Breast epithelium (tissue), 4 donors: ENCODE measurements at regions of chr16 and their contacts with region 1.

Region 1: GRCh38 chr16:49904348-49905062 is 48.6 kb upstream of the ZNF423 start:
- DNase-seq: no peak
- H3K4me3 ChIP-seq: no peak overlapping the region
- H3K27ac ChIP-seq: no peak overlapping the region
- H3K4me1 ChIP-seq: no peaks in the 10 kb centered on the region
- H3K27me3 ChIP-seq: no peaks in the 10 kb centered on the region
- CTCF ChIP-seq: no peak
- POLR2A ChIP-seq: no peak

Region 2: DNA sequence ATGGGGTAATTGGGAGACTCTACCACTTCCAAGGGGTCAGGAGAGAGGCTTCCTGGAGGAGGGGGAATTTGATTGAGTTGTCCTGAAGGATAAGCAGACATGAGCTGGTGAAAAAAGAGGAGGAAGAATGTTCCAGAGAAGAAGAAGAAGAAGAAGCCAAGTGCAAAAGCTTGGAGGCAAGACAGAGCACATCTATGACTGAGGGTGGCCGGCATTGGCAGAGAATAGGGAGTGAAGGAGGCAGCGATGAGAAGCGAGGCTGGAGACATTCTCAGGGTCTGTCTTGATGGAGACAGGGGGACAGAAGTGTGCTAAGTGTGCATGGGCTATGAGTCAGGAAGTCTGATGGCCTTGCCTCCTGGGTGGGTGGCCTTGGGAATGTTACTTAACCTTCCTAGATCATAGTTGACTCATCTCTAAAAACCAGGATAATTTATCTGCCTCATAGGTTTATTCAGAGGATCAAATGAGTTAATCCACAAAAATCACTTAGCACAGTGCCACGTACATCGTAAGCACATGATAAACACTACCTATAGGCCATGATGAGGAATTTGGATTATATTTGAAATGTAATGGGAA is 1920.4 kb before region 1 on chr16:
- intact Hi-C with region 1: no loop called
- DNase-seq: no peak
- H3K4me3 ChIP-seq: no peak overlapping the region
- H3K27ac ChIP-seq: no peak overlapping the region
- H3K4me1 ChIP-seq: no peaks in the 10 kb centered on the region
- H3K27me3 ChIP-seq: peaks cover 0 to 6% of the 10 kb centered on the region in 2 donors
- CTCF ChIP-seq: no peak
- POLR2A ChIP-seq: no peak

Region 3: DNA sequence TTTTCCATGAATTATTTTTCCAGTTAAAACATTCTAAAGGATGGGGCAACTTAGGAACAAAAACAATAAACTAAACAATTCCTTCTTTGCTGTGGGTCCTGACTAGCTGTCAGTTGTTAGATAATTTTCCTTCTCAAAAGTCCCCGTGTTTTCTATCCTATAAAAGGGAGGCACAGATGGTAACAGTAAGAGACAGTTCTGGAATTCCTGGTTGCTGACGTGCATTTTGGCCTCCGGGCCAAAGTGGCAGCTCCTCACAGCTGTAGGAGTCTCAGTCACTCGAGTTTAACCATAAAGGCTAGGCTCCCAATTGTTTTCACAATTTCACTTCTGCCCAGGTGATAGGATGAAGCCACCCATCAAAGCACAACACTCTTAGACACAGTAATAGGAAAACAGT is 28.4 kb after region 1 on chr16:
- intact Hi-C with region 1: no loop called
- DNase-seq: peak in 1 of 2 donors; percentile 21
- H3K4me3 ChIP-seq: no peak overlapping the region
- H3K27ac ChIP-seq: no peak overlapping the region
- H3K4me1 ChIP-seq: no peaks in the 10 kb centered on the region
- H3K27me3 ChIP-seq: no peaks in the 10 kb centered on the region
- CTCF ChIP-seq: no peak
- POLR2A ChIP-seq: no peak

Region 4: DNA sequence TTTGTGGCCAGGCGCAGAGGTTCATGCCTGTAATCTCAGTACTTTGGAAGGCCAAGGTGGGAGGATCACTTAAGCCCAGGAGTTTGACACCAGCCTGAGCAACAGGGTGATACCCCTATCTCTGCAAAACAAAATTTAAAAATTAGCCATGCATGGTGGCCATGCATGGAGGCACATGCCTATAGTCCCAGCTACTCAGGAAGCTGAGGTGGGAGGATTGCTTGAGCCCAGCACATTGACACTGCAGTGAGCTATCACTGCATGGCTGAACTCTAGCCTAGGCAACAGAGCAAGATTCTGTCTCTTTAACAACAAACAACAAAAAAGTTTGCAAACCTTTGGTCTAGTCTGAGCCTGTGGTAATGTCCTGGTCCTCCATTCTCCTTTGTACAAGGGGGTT is 51.4 kb after region 1 on chr16:
- intact Hi-C with region 1: loop called (anchors 2 kb)
- DNase-seq: no peak
- H3K4me3 ChIP-seq: no peak overlapping the region
- H3K27ac ChIP-seq: no peak overlapping the region
- H3K4me1 ChIP-seq: peaks cover 0 to 4% of the 10 kb centered on the region in 2 donors
- H3K27me3 ChIP-seq: no peaks in the 10 kb centered on the region
- CTCF ChIP-seq: no peak
- POLR2A ChIP-seq: no peak

Region 5: DNA sequence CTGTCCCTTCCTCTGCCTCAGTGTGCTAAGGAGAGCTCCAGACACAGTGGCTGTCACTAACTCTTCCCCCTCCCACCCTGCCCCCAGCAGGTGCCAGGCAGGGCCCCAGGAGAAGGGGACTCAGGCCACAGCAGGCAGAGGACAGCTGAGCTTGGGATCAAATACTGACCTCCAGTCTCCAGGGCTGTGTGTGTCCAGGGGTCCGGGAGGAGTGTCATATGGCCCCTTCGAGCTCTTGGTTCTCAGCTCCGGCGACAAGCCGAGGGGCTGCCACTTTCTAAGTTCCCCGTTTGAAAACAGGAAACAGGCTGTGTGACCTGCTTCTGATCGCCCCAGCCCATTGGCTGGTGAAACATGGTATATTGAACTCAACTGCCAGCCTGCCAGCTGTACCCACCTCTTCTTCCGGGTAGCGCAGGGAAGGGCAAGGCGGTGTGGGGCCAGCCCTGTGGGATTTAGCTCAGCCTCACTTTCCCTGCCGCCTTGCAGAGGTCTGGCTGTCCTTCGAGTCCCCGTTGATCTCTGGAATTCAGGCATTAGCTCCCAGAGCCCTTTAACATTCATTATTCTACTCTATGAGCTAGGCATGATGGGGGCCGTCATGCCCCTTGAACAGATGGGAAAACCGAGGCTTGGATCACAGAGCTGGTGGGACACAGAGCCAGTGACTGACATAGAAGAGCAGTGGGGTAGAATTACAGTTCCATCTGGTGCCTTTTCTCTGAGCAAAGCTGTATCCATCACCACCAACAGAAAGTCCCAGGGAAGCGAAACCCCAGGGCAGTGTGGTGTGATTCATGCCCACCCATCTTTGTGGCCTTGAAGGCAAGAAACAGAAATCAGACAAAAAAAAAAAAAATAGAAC is 776.7 kb after region 1 on chr16 and contains the start of gene SNX20:
- intact Hi-C with region 1: no loop called
- DNase-seq: no peak
- H3K4me3 ChIP-seq: peak within 1 kb of the TSS; percentile 23 to 43 (median 26)
- H3K27ac ChIP-seq: no peak within 1 kb of the TSS
- H3K4me1 ChIP-seq: no peaks in the 10 kb centered on the region
- H3K27me3 ChIP-seq: no peaks in the 10 kb centered on the region
- CTCF ChIP-seq: no peak
- POLR2A ChIP-seq: no peak
- total RNA-seq, gene SNX20: 1.3 to 2.9 (median 2.7) TPM

Region 6: GRCh38 chr16:51151435-51151960 is 1247.0 kb after region 1 on chr16:
- intact Hi-C with region 1: no loop called
- DNase-seq: peak in 1 of 2 donors; percentile 27
- H3K4me3 ChIP-seq: peak overlapping the region; percentile 29 to 72 (median 52)
- H3K27ac ChIP-seq: peak overlapping the region; percentile 17 to 76
- H3K4me1 ChIP-seq: peaks cover 0 to 5% of the 10 kb centered on the region in 2 donors
- H3K27me3 ChIP-seq: peaks cover 0 to 76% of the 10 kb centered on the region in 2 donors
- CTCF ChIP-seq: no peak
- POLR2A ChIP-seq: no peak